Activated T-helper 2 cell treated with anti-CD3 and anti-CD28 coated beads, Interferon-gamma antibody, Interleukin-2, Interleukin-4, amounts not matched to agents 10 μg/mL and 5 μg/mL and 100 μg/mL, durations not matched to agents 14 hours and 24 hours and 36 hours (primary cell): ENCODE measurements at regions of chr11 and their contacts with region 1.

Region 1: GRCh38 chr11:74449369-74449931 is 17.9 kb downstream of the KCNE3 start:
- DNase-seq: peak; percentile 15
- H3K4me3 Mint-ChIP-seq: no peak overlapping the region
- H3K27ac Mint-ChIP-seq: no peak overlapping the region
- H3K4me1 Mint-ChIP-seq: peaks cover 6% of the 10 kb centered on the region
- H3K27me3 Mint-ChIP-seq: peaks cover 5% of the 10 kb centered on the region

Region 2: DNA sequence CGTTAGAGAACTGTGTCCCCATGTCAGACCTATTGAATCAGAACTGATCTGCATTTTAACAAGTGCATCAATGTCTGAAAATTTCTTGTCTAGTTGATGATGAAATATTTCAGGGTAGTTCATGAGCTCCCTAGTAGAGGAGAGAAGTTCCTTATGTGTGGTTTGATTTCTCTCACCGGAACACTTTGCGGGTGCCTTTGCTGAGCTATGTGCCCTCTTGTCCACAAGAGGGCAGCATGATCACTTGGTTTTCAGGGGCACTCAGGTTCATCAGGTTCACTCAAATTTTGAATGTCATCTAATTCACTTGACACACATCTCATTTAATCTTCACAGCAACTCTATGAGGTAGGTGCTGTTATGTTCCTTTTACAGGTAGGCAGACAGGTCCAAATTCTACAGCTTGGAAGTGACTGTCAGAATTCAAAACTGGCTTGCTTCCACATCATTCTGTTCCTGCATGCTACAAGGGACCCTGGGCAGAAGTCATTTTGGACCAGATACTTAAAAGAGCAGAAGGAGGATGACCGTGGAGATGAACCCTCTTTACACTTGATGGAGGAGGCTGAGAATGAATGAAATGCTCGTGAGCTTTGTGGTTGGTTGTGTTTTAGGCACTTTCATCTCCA is 193.6 kb before region 1 on chr11:
- intact Hi-C with region 1: loop called (anchors 2 kb)
- DNase-seq: peak; percentile 25
- H3K4me3 Mint-ChIP-seq: no peak overlapping the region
- H3K27ac Mint-ChIP-seq: no peak overlapping the region
- H3K4me1 Mint-ChIP-seq: no peaks in the 10 kb centered on the region
- H3K27me3 Mint-ChIP-seq: no peaks in the 10 kb centered on the region

Region 3: DNA sequence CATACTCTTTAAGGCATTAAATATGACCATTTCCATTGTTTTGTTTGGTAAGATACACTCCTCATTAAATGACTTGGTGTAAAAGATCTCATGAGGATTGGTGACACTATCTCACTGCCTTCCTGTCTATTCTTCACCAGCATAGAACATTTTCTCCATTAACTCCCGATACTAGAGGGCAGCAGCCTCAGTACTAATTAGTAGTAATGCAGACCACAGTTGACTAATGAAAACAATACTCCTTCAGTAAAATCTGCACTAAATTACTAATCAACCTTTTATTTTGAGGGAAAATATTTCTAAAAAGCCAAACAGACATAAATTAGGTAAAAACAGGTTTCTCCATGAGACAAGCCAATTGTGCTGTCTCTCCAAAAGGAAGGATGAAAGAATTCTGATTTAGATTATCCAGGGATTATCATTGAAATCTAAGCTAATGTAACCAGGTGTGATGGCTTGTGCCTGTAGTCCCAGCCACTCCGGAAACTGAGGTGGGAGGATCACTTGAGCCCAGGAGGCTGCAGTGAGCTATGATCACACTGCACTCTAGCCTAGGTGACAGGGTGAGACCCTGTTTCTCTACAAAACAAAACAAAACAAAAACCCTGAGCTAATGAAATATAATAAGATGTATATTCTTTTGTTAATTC is 60.6 kb before region 1 on chr11:
- intact Hi-C with region 1: loop called (anchors 1 kb)
- DNase-seq: peak; percentile 35
- H3K4me3 Mint-ChIP-seq: no peak overlapping the region
- H3K27ac Mint-ChIP-seq: peak overlapping the region; percentile 11
- H3K4me1 Mint-ChIP-seq: peaks cover 26% of the 10 kb centered on the region
- H3K27me3 Mint-ChIP-seq: no peaks in the 10 kb centered on the region

Region 4: DNA sequence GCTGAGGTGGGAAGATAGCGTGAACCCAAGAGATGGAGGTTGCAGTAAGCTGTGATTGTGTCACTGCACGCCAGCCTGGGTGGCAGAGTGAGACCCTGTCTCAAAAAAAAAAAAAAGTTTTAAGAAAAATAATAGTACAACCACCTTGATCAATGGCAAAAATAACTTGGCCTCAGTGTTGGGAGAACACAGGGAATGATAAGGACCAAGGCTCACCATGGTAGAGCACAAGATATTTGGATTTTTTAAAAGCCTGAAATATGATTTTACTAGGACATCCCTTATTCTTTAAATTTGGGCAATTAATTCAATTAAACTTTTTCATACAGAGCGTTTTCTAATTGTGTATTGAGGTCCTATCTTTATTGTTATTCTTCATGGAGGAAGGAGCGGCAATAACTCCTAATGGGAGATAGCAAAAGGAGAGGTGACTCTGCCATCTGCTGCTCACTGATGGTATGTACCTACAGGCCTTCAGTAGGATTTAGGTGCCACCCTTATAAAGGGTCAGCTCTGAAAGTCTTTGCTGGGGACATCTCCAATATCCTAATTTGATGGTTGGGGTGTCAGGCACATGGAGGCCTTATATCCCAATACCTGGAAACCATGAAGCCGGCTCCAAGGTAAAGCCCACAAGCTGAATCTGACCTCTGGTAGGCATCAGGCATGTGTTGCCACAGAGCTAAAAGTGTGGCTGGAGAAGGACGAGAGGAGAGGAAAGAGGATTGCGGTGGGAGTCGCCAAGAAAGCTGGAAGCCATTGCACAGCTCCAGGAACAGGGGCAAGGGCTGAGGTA is 121.0 kb after region 1 on chr11:
- intact Hi-C with region 1: loop called (anchors 1 kb)
- DNase-seq: no peak
- H3K4me3 Mint-ChIP-seq: no peak overlapping the region
- H3K27ac Mint-ChIP-seq: no peak overlapping the region
- H3K4me1 Mint-ChIP-seq: no peaks in the 10 kb centered on the region
- H3K27me3 Mint-ChIP-seq: peaks cover 6% of the 10 kb centered on the region

Region 5: GRCh38 chr11:74726547-74727182 is 277.2 kb after region 1 on chr11:
- intact Hi-C with region 1: loop called (anchors 2 kb)
- DNase-seq: peak; percentile 26
- H3K4me3 Mint-ChIP-seq: no peak overlapping the region
- H3K27ac Mint-ChIP-seq: no peak overlapping the region
- H3K4me1 Mint-ChIP-seq: peaks cover 2% of the 10 kb centered on the region
- H3K27me3 Mint-ChIP-seq: peaks cover 55% of the 10 kb centered on the region